Activated CD4-positive, alpha-beta T cell treated with anti-CD3 and anti-CD28 coated beads, Interleukin-2, amount 10 ng/mL, durations not matched to agents 24 days and 14 days (primary cell): ENCODE measurements at regions of chr9 and their contacts with region 1.

Region 1: DNA sequence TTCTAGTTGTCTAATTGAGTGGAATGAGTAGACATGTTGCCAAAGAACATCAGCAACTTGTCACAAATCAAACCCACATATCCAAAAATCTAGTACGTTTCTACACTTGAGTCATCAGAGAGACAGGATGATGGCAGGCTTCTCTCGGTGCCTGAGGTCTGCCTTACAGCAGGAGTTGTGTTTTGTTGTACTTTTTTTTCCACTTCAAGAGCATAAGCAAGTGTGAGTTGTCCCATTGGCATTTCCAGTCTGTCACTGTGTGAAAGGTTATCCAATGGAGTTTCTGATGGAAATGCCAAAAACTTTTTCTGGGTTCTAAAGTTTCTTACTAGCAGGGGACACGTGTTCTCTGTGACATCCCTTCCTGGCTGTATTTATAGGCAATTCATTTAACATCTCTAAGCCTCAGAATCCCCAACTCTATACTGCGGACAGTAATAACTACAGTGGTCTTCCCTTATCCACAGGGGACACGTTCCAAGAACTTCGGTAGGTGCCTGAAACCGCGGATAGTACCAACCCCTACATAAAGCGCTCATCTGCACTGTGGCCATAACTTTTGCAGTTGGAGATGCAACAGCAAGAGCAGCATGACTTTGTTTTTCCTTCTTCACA is 246.5 kb downstream of the SYK start:
- DNase-seq: peak; percentile 83
- H3K4me3 Mint-ChIP-seq: peak overlapping the region; percentile 72
- H3K27ac Mint-ChIP-seq: peak overlapping the region; percentile 93
- H3K4me1 Mint-ChIP-seq: peaks cover 64% of the 10 kb centered on the region
- H3K27me3 Mint-ChIP-seq: no peaks in the 10 kb centered on the region

Region 2: DNA sequence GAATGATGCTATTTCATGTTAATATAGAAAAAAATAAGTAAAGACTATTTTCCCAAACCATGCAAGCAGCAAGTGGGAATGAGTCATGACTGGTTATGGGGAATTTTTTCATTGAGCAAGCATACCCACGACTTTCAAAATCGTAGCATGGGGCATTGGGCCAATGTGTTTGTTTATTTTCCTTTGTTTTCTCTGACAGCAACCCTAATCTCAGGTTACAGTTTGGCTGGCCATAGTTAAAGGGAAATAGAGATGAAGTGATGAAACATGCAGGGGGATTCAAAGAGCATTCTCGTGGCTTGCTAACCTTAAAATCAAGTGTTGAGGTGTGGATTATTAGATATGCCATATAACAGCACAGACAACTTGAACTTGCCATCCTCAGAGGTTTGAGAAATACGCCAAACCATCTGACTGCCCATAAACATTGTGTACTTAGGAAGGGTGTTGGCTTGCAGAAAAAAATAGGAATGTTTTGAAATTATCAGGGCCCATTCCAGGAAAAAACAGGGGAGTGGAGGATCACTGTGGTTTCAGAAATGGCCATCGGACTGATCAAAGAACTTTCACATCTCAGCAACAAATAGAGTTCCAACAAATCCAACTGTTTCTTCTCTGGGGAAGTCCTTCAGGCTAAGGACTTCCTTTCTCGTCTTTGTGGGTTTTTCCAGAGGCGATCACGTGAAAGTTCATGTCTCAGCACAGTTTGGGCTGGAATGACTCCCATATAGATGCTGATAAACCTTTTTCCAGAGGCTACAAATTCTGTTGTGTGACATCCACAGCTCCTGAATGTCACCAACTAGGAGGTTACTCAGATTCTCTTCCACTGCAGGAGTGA is 12.6 kb after region 1 on chr9:
- intact Hi-C with region 1: loop called (anchors 1 kb)
- DNase-seq: peak; percentile 36
- H3K4me3 Mint-ChIP-seq: peak overlapping the region; percentile 7
- H3K27ac Mint-ChIP-seq: peak overlapping the region; percentile 89
- H3K4me1 Mint-ChIP-seq: peaks cover 36% of the 10 kb centered on the region
- H3K27me3 Mint-ChIP-seq: no peaks in the 10 kb centered on the region

Region 3: GRCh38 chr9:91101611-91102168 is 53.6 kb after region 1 on chr9:
- intact Hi-C with region 1: loop called (anchors 1 kb)
- DNase-seq: peak; percentile 97
- H3K4me3 Mint-ChIP-seq: peak overlapping the region; percentile 70
- H3K27ac Mint-ChIP-seq: peak overlapping the region; percentile 89
- H3K4me1 Mint-ChIP-seq: peaks cover 67% of the 10 kb centered on the region
- H3K27me3 Mint-ChIP-seq: no peaks in the 10 kb centered on the region

Region 4: GRCh38 chr9:91207729-91208418 is 159.8 kb after region 1 on chr9:
- intact Hi-C with region 1: loop called (anchors 1 kb)
- DNase-seq: peak; percentile 83
- H3K4me3 Mint-ChIP-seq: peak overlapping the region; percentile 68
- H3K27ac Mint-ChIP-seq: peak overlapping the region; percentile 98
- H3K4me1 Mint-ChIP-seq: peaks cover 46% of the 10 kb centered on the region
- H3K27me3 Mint-ChIP-seq: no peaks in the 10 kb centered on the region

Region 5: DNA sequence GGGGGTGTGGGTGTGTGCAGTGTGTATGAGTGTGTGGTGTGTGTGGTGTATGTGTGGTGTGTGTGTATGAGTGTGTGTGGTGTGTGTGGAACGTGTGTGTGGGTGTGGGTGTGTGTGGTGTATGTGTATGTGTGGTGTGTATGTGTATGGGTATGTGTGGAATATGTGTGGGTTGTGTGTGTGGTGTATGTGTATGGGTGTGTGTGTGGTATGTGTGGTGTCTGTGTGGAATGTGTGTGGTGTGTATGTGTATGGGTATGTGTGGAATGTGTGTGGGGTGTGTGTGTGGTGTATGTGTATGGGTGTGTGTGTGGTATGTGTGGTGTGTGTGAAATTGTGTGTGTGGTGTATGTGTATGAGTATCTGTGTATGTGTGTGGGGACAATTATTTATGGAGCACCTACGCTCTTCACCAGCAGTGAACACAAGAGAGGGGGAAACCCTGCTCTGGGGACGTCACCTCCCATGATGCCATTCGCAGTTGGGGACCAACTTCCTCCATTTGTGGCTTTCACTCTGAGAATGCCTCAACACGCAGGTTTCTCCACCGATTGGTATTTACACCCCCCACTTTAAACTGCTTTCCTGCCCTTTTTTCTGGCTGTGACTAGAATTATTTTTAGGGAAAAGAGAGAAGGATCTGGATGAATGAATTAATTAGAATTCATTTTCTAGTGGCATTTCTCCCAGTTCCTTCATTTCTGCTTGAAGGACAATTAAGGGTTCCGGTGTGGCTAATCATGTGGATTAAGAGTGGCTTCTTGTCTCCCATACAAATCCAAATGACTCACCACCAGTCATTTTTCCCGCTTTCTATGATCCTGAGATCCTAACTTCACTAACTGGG is 663.9 kb after region 1 on chr9:
- intact Hi-C with region 1: loop called (anchors 5 kb)
- DNase-seq: peak; percentile 90
- H3K4me3 Mint-ChIP-seq: no peak overlapping the region
- H3K27ac Mint-ChIP-seq: no peak overlapping the region
- H3K4me1 Mint-ChIP-seq: peaks cover 4% of the 10 kb centered on the region
- H3K27me3 Mint-ChIP-seq: peaks cover 13% of the 10 kb centered on the region